ENCODE measurements at regions of chr17 and their contacts with region 1.

Region 1: GRCh38 chr17:38868817-38869525 is 887 bp upstream of the LASP1 start:
- DNase-seq: peak; percentile 77
- H3K4me3 ChIP-seq: peak overlapping the region; percentile 98
- H3K27ac ChIP-seq: peak overlapping the region; percentile 96
- H3K27me3 ChIP-seq: no peaks in the 10 kb centered on the region
- CTCF ChIP-seq: peak; percentile 36

Region 2: GRCh38 chr17:38853292-38854219 is 15.4 kb before region 1 on chr17 and contains the start of gene RPL23:
- CTCF ChIA-PET with region 1: interaction called, 4 read pairs
- POLR2A ChIA-PET with region 1: interaction called, 74 read pairs
- DNase-seq: peak; percentile 89
- H3K4me3 ChIP-seq: peak within 1 kb of the TSS; percentile 91
- H3K27ac ChIP-seq: peak within 1 kb of the TSS; percentile 90
- H3K27me3 ChIP-seq: no peaks in the 10 kb centered on the region
- CTCF ChIP-seq: no peak
- polyA plus RNA-seq, gene RPL23: 2,769 and 3,155 TPM in 2 replicates

Region 3: DNA sequence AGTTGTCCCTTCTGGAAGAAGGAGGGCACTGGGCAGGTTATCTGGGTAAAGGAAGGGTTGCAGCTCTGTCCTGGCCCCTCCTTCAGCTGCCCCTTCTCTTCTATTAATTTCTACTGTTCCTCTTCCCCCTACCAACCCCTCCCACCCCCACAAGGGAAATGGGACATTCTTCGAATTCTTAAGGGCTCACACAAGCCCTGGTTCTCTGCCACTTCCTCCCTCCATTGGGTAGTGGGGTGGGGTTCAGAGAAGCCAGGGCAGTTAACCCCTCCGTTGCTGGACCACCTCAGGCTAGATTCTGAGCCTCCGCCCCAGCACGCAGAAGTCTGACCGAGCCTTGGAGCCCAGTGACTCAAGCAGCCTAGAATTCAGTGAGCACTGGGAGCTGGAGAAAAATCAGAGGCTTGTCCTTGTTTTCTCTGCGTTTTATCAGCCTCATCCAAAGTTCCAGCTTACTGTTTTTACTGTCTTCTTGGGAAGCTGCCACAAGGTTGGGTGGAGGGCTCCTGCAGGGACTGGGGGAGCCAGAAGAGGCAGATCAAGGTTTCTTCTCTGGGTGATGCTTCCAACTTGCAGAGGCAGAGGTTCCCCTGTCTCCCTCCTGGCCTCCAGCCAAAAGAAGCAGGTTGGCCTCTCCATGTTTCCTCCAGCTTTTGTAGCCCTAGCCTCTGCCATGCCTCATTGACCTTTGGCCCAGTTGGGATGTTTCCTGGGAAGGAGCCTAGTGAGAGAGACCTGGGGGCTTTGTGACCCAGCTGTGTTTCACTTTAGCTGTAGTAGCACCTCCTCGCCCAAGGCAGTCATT is 11.1 kb after region 1 on chr17:
- CTCF ChIA-PET with region 1: interaction called, 3 read pairs
- POLR2A ChIA-PET with region 1: interaction called, 28 read pairs
- DNase-seq: no peak
- H3K4me3 ChIP-seq: peak overlapping the region; percentile 12; the same call in 1 of the 2 replicates
- H3K27ac ChIP-seq: peak overlapping the region; percentile 69
- H3K27me3 ChIP-seq: no peaks in the 10 kb centered on the region
- CTCF ChIP-seq: no peak

Region 4: DNA sequence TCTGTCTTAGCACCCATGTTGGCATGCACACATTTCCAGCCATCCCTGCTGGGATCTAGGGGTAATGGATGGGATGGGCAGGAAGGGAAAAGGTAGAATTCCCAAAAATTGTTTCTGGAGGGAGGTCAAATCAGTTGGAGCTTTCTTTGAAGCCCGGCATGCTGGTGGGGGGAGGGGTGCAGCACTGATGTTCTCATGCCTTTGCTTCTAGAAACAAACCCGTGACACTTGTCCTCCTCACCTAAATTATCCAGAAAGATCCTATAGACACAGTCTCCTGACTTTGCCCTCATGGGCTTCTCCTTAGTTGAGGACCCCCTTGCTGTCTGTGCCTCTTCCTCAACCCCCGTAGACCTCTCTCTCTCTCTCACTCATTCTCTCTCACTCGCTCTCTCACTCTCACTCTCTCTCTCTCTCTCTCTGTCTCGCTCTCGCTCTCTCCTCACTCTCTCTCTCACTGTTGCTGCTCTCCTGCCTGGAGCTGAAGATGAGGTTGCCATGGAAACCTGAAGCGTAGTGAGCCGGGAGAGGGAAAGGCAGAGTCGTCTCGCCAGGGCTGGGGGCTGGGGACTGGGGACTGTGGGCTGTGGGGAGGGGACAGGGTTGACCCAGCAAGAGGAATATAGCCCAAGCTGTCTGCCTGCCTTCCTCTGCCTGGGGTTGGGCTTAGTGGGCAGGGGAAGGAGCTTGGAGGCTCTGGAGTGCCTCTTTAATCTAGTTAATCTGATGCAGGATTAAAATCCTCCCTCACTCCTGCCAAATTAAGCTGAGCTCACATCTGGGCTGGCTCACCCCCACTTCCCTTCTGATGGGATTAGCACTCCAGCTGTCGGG is 17.0 kb after region 1 on chr17:
- CTCF ChIA-PET with region 1: interaction called, 3 read pairs
- POLR2A ChIA-PET with region 1: interaction called, 15 read pairs
- DNase-seq: no peak
- H3K4me3 ChIP-seq: no peak overlapping the region
- H3K27ac ChIP-seq: peak overlapping the region; percentile 11
- H3K27me3 ChIP-seq: no peaks in the 10 kb centered on the region
- CTCF ChIP-seq: no peak

Region 5: DNA sequence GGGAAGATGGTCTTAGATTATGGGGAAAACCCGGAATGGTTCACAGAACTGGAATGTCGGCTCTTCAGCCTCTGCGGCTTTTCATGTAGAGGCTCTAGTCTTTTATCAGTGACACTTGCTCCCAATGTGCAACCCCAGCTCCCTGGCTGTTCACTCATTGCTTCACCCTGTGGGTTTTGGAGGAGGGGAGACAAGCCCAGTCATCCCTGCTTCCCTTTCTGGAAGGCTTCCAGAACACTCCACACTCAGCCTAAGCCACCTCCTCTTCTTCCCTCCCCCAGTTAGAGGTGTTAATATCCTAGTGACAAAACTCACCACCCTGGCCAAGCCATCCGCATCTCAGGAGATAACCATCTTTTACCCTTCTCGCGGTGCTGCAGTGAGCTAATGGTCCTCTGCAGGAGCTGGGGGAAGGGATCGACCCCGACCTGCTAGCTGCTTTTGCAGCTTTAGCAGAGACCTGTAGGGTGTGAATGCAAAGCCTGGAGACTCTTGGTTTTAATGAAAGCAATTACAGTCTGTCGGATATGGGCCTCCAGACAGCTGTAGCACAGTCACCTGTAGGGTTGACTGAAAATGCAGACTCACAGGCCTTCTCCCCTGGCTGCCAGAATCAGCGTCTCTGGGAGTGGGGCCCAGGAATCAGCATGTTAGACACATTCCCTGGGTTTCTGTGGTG is 32.1 kb after region 1 on chr17:
- CTCF ChIA-PET with region 1: interaction called, 6 read pairs
- POLR2A ChIA-PET with region 1: interaction called, 23 read pairs
- DNase-seq: peak; percentile 88
- H3K4me3 ChIP-seq: no peak overlapping the region
- H3K27ac ChIP-seq: peak overlapping the region; percentile 40
- H3K27me3 ChIP-seq: no peaks in the 10 kb centered on the region
- CTCF ChIP-seq: no peak

Region 6: GRCh38 chr17:38967290-38967738 is 98.3 kb after region 1 on chr17 and contains the start of gene FBXO47:
- CTCF ChIA-PET with region 1: no interaction called
- POLR2A ChIA-PET with region 1: no interaction called
- DNase-seq: peak; percentile 51
- H3K4me3 ChIP-seq: peak within 1 kb of the TSS; percentile 20; the same call in 1 of the 2 replicates
- H3K27ac ChIP-seq: peak within 1 kb of the TSS; percentile 31
- H3K27me3 ChIP-seq: no peaks in the 10 kb centered on the region
- CTCF ChIP-seq: peak; percentile 6; the same call in 1 of the 2 replicates
- polyA plus RNA-seq, gene FBXO47: not detected in 2 replicates

Region 7: DNA sequence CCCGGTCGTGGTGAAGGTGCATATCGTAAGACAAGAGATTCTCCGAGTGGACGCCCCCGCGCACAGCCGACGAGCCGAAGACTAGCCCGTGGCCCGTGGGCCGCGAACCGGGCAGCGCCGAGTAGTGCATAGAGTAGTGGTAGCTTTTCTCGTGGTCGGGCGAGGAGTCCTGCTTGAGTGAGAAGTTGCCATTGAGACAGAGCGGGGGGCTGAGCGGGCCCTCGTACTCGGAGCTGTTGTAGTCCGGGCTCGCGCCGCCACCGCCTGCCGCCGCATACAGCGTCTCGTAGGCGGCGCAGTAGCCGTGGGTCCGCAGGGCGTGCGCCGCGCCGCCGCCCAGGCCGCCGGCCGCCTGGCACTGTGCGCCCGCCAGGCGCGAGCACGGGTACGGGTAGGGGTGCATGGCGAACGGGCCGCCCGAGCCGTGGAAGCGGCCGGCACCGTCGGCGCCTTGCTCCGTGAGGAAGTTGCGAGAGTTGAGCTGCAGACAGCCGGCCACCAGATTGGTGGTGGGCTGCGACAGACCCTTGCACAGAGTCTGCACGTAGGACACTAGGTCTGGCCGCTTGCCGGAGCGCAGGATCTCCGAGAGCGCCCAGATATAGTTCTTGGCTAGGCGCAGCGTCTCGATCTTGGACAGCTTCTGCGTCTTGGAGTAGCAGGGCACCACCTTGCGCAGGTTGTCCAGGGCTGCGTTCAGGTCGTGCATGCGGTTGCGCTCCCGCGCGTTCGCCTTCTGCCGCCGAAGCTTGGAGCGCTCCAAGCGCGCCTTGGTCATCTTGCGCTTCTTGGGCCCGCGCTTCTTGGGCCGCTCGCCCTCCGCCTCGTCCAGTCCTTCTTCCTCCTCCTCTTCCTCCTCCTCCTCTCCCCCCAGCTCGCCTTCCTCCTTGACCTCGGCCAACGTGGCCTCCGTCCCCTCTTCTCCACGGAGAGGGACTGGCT is 736.8 kb after region 1 on chr17:
- CTCF ChIA-PET with region 1: no interaction called
- POLR2A ChIA-PET with region 1: interaction called, 11 read pairs
- DNase-seq: no peak
- H3K4me3 ChIP-seq: no peak overlapping the region
- H3K27ac ChIP-seq: no peak overlapping the region
- H3K27me3 ChIP-seq: peaks cover 86% of the 10 kb centered on the region
- CTCF ChIP-seq: no peak

Measured in AG04450 (cell line).